ENCODE measurements at regions of chr1 and their contacts with region 1.

Region 1: DNA sequence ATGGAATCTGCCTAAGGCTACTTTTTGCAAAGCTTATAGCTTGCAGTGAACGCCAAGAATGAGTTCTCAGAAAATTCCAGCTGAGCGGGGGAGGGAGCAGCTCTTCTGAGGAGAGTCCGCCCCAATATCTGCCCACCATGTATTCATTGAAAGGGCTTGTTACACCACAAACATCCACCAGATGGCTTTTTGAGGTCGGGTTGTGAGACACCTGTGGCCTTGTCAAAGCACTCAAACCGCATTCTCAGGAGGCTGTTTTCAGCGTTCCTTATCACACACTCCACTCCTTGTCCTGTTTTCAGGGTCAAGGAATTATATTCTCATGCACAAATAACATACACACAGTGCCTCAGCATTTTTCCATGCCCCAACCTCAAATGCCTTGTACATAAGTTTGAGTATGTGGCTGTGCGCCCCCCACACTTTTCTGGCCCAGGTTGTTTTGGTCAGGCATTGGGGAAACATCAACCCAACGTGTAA is 3.9 kb upstream of the C4BPB start:
- DNase-seq: peak in 1 of 3 donors; percentile 82
- ATAC-seq: peak; percentile 48
- H3K4me3 ChIP-seq: no peak overlapping the region
- H3K4me1 ChIP-seq: peaks cover 2% of the 10 kb centered on the region
- CTCF ChIP-seq: no peak

Region 2: DNA sequence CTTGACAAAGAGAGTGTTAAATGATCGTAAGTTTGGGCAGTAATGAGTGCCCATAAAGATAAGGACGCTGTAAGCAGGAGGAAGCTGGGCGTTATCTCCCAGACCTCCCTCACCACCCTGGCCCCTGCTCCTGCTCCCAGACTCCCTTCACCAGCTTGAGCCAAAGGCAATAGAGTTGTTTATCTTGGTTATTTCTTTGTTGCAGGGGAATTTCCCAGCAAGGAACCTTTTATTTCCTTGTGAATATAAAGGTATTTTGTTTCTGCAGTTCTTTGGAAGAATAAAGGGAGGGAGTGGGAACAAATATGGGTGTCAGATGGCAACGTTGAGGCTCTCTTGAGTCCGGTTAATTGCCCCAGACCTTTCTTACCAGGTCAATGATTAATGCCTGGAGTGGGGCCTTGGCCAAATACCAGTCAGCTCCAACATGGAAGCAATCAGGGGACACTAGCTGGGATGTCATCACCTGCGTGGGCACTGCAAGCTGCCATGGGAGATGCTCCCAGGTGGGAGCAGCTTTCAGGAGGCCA is 142.8 kb before region 1 on chr1:
- intact Hi-C with region 1: no loop called
- DNase-seq: peak; percentile 76 to 83 (median 81)
- ATAC-seq: peak; percentile 75
- H3K4me3 ChIP-seq: no peak overlapping the region
- H3K4me1 ChIP-seq: peaks cover 7% of the 10 kb centered on the region
- CTCF ChIP-seq: no peak

Region 3: GRCh38 chr1:207404849-207405525 is 320.2 kb after region 1 on chr1:
- intact Hi-C with region 1: loop called in 1 of 2 experiments (anchors 5 kb)
- DNase-seq: peak in 1 of 3 donors; percentile 7
- ATAC-seq: peak; percentile 84
- H3K4me3 ChIP-seq: no peak overlapping the region
- H3K4me1 ChIP-seq: no peaks in the 10 kb centered on the region
- CTCF ChIP-seq: peak; percentile 43

Region 4: DNA sequence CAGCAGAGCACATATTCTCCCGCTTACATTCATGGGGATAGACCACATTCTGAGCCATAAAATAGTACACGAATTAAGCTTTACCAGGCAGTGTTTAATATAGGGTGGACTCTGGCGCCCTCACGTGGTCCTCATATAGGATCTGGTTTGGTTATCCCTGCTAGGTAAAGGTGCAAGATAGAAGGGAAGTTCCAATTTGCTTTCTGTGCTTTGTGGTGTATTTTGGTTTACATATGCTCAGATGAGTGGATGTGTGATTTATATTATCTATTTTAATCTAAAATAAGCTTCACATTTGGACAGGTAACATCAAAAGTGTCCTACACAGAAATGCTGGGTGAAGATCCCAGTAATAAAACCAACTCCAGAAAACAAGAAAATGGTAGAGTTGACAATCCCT is 414.8 kb after region 1 on chr1:
- intact Hi-C with region 1: loop called in 1 of 2 experiments (anchors 5 kb)
- DNase-seq: peak in 2 of 3 donors; percentile 61 to 86
- ATAC-seq: peak; percentile 85
- H3K4me3 ChIP-seq: no peak overlapping the region
- H3K4me1 ChIP-seq: peaks cover 6% of the 10 kb centered on the region
- CTCF ChIP-seq: peak; percentile 45

Measured in mucosa of descending colon (tissue), 3 donors.